Activated T-helper 2 cell treated with anti-CD3 and anti-CD28 coated beads, Interferon-gamma antibody, Interleukin-2, Interleukin-4, amounts not matched to agents 10 μg/mL and 5 μg/mL and 100 μg/mL, durations not matched to agents 14 hours and 24 hours and 36 hours (primary cell): ENCODE measurements at regions of chr3 and their contacts with region 1.

Region 1: DNA sequence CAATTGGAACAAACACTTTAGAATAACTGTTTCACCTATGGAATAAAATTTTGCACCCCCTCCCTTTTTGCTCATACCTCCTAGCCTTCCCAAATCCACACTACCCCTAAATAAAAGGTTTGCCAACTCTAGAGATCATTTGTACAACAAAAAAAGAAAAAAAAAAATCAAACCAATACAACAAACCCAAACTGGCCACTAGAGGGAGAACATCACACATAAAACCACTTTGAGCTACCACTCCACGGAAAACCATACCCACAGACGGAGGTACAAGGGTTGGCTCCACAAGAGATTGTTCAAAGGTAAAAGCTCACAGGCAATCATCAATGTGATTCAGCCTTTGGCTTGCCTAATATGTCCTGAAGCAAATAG is 47.6 kb downstream of the SETMAR start:
- DNase-seq: peak; percentile 27
- H3K4me3 Mint-ChIP-seq: peak overlapping the region; percentile 43
- H3K27ac Mint-ChIP-seq: peak overlapping the region; percentile 74
- H3K4me1 Mint-ChIP-seq: peaks cover 23% of the 10 kb centered on the region
- H3K27me3 Mint-ChIP-seq: peaks cover 9% of the 10 kb centered on the region

Region 2: GRCh38 chr3:4387210-4388204 is 36.7 kb after region 1 on chr3:
- intact Hi-C with region 1: loop called (anchors 1 kb)
- DNase-seq: no peak
- H3K4me3 Mint-ChIP-seq: no peak overlapping the region
- H3K27ac Mint-ChIP-seq: peak overlapping the region; percentile 87
- H3K4me1 Mint-ChIP-seq: peaks cover 45% of the 10 kb centered on the region
- H3K27me3 Mint-ChIP-seq: no peaks in the 10 kb centered on the region

Region 3: DNA sequence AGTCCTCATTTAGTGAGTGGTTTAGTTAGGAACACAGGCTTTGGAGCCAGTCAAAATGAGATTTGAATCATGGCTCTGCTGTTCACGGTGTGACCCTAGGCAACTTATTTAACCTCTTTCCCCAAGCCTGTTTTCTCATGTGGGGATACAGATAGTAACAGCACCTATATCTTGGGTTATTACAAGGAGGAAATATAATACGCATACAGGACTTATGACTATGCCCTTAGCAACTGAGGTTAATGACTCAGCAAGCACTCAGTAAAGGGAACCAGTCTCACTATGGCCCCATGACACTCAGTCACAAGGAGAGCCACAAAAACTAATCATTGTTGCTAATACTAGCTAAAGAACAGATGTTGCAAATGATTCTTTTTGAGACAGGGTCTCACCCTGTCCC is 70.3 kb after region 1 on chr3:
- intact Hi-C with region 1: loop called (anchors 1 kb)
- DNase-seq: no peak
- H3K4me3 Mint-ChIP-seq: no peak overlapping the region
- H3K27ac Mint-ChIP-seq: peak overlapping the region; percentile 69
- H3K4me1 Mint-ChIP-seq: peaks cover 43% of the 10 kb centered on the region
- H3K27me3 Mint-ChIP-seq: no peaks in the 10 kb centered on the region

Region 4: GRCh38 chr3:4524088-4525023 is 173.6 kb after region 1 on chr3:
- intact Hi-C with region 1: loop called (anchors 1 kb)
- DNase-seq: no peak
- H3K4me3 Mint-ChIP-seq: no peak overlapping the region
- H3K27ac Mint-ChIP-seq: no peak overlapping the region
- H3K4me1 Mint-ChIP-seq: peaks cover 23% of the 10 kb centered on the region
- H3K27me3 Mint-ChIP-seq: no peaks in the 10 kb centered on the region

Region 5: GRCh38 chr3:4633078-4634004 is 282.6 kb after region 1 on chr3:
- intact Hi-C with region 1: loop called (anchors 1 kb)
- DNase-seq: no peak
- H3K4me3 Mint-ChIP-seq: no peak overlapping the region
- H3K27ac Mint-ChIP-seq: no peak overlapping the region
- H3K4me1 Mint-ChIP-seq: peaks cover 8% of the 10 kb centered on the region
- H3K27me3 Mint-ChIP-seq: no peaks in the 10 kb centered on the region